Testis (tissue), 5 donors: ENCODE measurements at regions of chr20 and their contacts with region 1.

Region 1: DNA sequence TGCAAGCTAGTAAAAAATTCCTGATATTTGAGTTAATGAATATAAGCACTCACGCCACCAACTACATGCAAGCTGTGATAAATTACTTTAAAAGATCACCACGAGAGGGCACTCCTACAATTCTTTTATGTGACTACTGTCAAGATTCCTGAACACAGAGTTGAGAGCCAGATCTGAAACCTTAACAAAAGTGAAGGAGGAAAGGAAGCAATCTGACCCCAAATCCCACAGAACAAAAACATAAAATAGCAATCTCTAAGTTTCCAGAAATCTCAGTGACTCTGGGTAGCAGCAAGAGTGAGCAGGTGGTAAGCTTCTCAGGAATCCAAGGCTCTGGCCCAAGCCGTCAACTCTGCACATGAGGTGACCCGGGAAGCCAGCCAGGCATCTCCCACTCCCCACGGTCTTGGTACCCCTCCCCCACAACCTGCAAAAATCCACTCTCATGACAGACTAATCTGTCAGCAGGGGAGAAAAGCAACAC is 55.1 kb downstream of the STAU1 start:
- DNase-seq: no peak
- H3K4me3 ChIP-seq: no peak overlapping the region
- H3K27ac ChIP-seq: no peak overlapping the region
- H3K4me1 ChIP-seq: peaks cover 3% of the 10 kb centered on the region
- H3K27me3 ChIP-seq: no peaks in the 10 kb centered on the region
- CTCF ChIP-seq: peak; percentile 39 to 56 (median 47)
- POLR2A ChIP-seq: no peak

Region 2: GRCh38 chr20:49219089-49219923 is 86.3 kb after region 1 on chr20 and contains the start of gene DDX27:
- intact Hi-C with region 1: loop called (anchors 10 kb)
- DNase-seq: peak; percentile 99
- H3K4me3 ChIP-seq: peak within 1 kb of the TSS; percentile 79 to 80
- H3K27ac ChIP-seq: peak within 1 kb of the TSS; percentile 64 to 87
- H3K4me1 ChIP-seq: peaks cover 9% of the 10 kb centered on the region
- H3K27me3 ChIP-seq: no peaks in the 10 kb centered on the region
- CTCF ChIP-seq: no peak
- POLR2A ChIP-seq: peak; percentile 66
- total RNA-seq, gene DDX27: 53.3 to 54.1 TPM